Sciatic nerve (tissue), 2 donors: ENCODE measurements at regions of chr9 and their contacts with region 1.

Region 1: GRCh38 chr9:130461218-130461630 is 16.5 kb downstream of the ASS1 start:
- DNase-seq: peak; percentile 83
- ATAC-seq: peak; percentile 77

Region 2: DNA sequence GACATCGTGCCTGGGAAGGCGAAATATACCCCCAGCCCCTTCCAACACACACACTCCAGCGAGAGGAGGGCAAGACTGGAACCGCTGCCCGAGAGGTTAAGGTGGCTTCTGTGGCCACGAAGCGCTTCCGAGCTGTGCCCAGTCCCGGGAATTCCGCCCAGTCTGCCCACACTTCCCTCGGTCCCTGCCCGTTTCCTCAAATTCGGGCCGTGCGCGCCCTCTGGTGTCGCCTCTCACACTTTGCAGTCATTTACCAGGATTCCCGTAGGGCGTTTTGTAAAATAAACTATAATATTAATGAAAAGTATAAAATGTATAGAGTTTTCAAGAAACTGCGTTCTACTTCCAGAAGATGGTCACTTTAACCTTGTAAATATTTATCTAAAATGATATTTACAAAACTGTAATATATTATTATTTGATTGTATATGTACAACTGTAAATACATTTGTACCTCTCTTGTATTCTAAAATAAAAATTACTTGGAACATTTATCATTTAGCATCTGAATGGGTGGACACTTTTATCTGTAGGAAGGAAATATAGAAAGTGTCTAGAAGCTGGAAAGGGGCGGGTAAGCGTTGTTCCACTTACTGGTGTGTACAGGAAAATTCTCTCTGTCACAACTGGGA is 221.4 kb after region 1 on chr9:
- intact Hi-C with region 1: loop called (anchors 2 kb)
- DNase-seq: peak; percentile 85
- ATAC-seq: peak; percentile 78